ENCODE measurements at regions of chr9 and their contacts with region 1.

Region 1: GRCh38 chr9:385818-386398 is 171.2 kb downstream of the DOCK8 start:
- DNase-seq: no peak
- ATAC-seq: peak; percentile 89

Region 2: GRCh38 chr9:534886-535285 is 149.0 kb after region 1 on chr9:
- intact Hi-C with region 1: no loop called
- DNase-seq: peak; percentile 50
- ATAC-seq: peak; percentile 70

Region 3: GRCh38 chr9:546797-547223 is 160.9 kb after region 1 on chr9:
- intact Hi-C with region 1: loop called (anchors 5 kb)
- DNase-seq: no peak
- ATAC-seq: peak; percentile 79

Region 4: GRCh38 chr9:806285-807156 is 420.6 kb after region 1 on chr9:
- intact Hi-C with region 1: loop called (anchors 10 kb)
- DNase-seq: no peak
- ATAC-seq: peak; percentile 28

Measured in left ventricle myocardium superior (tissue), 1 donor.